ENCODE measurements at regions of chr17 and their contacts with region 1.

Region 1: DNA sequence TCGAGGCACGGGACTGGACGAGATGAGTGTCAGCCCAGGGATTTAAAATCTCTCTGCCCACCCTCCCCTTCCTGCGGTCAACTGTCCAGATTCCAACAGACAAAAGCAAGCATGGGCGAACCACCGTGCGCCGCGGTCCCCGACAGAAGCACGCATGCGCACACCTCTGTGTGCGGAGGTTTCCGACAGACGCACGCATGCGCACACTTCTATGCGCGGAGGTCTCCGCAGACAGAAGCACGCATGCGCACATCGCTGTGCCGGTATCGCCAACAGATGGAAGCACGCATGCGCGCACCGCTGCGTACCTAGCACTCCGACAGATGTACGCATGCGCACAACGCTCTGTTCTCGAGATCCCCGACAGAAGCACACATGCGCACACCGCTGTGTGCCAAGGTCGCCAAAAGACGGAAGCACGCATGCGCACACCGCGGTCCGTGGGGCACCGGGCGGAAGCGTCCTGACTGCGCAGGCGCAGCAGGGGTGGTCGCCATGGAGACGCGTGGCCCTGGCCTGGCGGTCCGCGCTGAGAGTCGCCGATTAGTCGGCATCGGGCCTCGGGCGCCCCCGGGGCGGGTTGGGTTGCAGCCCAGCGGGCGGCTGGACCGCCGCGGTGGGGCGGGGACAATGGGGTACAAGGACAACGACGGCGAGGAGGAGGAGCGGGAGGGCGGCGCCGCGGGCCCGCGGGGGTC is 57.4 kb upstream of the RPH3AL start:
- DNase-seq: peak; percentile 98 to 100 (median 99)
- ATAC-seq: peak; percentile 15
- H3K4me3 ChIP-seq: peak overlapping the region; percentile 86
- H3K4me3 Mint-ChIP-seq: peak overlapping the region; percentile 91
- H3K27ac ChIP-seq: peak overlapping the region; percentile 88 to 95
- H3K27ac Mint-ChIP-seq: peak overlapping the region; percentile 96
- H3K4me1 ChIP-seq: peaks cover 63% of the 10 kb centered on the region
- H3K4me1 Mint-ChIP-seq: peaks cover 58% of the 10 kb centered on the region
- H3K27me3 ChIP-seq: no peaks in the 10 kb centered on the region
- H3K27me3 Mint-ChIP-seq: peaks cover 4% of the 10 kb centered on the region
- CTCF ChIP-seq: no peak

Region 2: GRCh38 chr17:444879-445454 is 35.0 kb after region 1 on chr17:
- CTCF ChIA-PET with region 1: interaction called, 12 read pairs
- POLR2A ChIA-PET with region 1: interaction called, 3 read pairs
- intact Hi-C with region 1: no loop called
- DNase-seq: no peak
- ATAC-seq: no peak
- H3K4me3 ChIP-seq: no peak overlapping the region
- H3K4me3 Mint-ChIP-seq: no peak overlapping the region
- H3K27ac ChIP-seq: no peak overlapping the region
- H3K27ac Mint-ChIP-seq: no peak overlapping the region
- H3K4me1 ChIP-seq: peaks cover 31% of the 10 kb centered on the region
- H3K4me1 Mint-ChIP-seq: peaks cover 14% of the 10 kb centered on the region
- H3K27me3 ChIP-seq: no peaks in the 10 kb centered on the region
- H3K27me3 Mint-ChIP-seq: no peaks in the 10 kb centered on the region
- CTCF ChIP-seq: no peak

Region 3: DNA sequence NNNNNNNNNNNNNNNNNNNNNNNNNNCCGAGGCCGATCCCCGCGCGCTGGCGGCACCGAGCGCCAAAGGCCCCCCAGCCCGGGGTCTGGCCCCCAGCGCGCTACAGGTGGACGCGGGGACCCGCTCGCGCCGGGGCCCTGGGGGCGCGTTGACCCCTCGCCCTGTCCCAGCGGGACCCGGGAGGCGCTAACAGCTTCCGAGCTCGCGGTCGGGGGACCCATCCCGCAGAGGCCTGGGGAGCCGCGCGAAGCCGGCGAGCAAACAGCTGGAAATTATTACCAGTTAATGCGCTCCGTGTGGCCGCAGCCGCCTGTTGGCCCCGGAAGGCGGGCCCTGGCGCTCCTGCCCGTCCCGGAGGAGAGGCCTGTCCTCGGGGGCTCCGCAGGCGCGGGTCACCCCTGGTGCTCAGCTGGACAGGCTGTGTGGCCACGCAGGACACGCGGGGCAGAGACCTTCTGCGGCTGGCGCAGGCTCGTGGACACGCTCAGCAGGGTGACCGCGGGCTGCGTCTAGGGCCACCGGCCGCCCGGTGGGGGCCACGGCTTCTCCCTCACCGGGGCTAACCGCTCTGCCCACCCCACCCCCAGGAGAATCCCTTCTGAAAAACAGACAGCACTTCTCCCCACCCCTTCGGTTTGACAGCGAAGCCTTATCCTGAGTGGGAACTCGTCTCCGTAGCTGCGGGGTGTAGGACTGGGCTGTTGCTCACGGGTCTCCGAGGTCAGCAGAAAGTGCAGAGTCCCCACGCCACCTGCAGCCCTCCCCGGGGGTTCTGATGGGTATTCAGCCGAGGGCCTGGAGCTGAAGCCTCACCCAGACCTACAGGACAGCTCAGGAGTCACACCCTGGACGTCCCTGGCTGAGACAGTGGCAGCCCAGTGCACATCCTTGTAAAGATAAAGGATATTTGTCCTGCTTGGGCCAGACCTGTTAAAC is 81.4 kb after region 1 on chr17:
- CTCF ChIA-PET with region 1: interaction called, 14 read pairs
- POLR2A ChIA-PET with region 1: interaction called, 37 read pairs
- intact Hi-C with region 1: no loop called
- DNase-seq: peak in 10 of 14 experiments; percentile 9 to 66 (median 32)
- ATAC-seq: no peak
- H3K4me3 ChIP-seq: peak overlapping the region; percentile 25
- H3K4me3 Mint-ChIP-seq: peak overlapping the region; percentile 86
- H3K27ac ChIP-seq: no peak overlapping the region
- H3K27ac Mint-ChIP-seq: peak overlapping the region; percentile 88
- H3K4me1 ChIP-seq: peaks cover 25% of the 10 kb centered on the region
- H3K4me1 Mint-ChIP-seq: peaks cover 15% of the 10 kb centered on the region
- H3K27me3 ChIP-seq: no peaks in the 10 kb centered on the region
- H3K27me3 Mint-ChIP-seq: peaks cover 4% of the 10 kb centered on the region
- CTCF ChIP-seq: no peak

Region 4: DNA sequence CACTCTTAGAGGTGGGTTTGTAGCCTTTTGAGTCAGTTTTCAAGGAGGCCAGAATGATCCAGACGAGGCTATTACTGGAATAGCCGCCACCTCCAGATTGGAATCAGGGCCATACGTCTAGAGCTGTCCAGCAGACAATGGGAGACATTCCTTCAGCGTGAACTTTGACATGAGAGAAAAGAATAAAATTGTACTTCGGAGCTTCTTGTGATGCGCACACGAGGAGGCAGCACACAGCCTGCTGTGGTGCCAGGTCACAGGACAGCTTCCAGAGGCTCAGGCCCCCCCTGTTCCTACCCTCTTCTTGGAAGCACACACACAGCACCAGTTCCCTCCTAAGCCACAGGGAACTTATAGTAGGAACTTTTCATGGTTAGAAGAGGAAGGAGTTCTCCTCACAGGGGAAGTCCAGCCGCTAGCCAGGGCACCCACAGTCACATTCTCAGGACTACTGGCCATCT is 223.7 kb after region 1 on chr17:
- CTCF ChIA-PET with region 1: interaction called, 3 read pairs
- POLR2A ChIA-PET with region 1: no interaction called
- intact Hi-C with region 1: loop called in 1 of 2 experiments (anchors 5 kb)
- DNase-seq: no peak
- ATAC-seq: no peak
- H3K4me3 ChIP-seq: no peak overlapping the region
- H3K4me3 Mint-ChIP-seq: no peak overlapping the region
- H3K27ac ChIP-seq: no peak overlapping the region
- H3K27ac Mint-ChIP-seq: no peak overlapping the region
- H3K4me1 ChIP-seq: no peaks in the 10 kb centered on the region
- H3K4me1 Mint-ChIP-seq: no peaks in the 10 kb centered on the region
- H3K27me3 ChIP-seq: no peaks in the 10 kb centered on the region
- H3K27me3 Mint-ChIP-seq: no peaks in the 10 kb centered on the region
- CTCF ChIP-seq: no peak

Region 5: DNA sequence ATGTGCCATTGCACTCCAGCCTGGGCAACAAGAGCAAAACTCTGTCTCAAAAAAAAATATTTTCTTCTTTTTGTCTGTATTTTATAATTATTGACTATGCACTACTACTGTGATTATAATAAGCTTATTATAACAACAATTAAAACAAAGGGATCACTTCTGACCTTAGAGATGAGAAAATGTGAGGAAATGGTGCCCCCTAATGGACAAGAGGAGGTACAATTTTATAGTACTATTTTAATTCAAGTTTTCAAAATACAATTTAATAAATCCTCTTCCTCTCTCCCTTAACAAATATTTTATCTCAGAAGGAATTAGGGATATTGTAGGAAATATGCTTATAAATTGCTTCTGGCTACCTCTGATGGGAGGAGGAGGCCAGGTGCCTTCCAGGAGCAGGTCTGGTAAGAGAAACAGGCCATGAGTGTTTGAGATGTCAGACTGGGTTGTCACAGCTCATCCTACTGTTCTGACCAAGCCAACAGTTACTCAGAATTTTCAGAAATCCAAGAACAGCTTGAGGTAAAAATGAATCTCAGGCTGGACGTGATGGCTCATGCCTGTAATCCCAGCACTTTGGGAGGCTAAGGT is 290.6 kb after region 1 on chr17:
- CTCF ChIA-PET with region 1: interaction called, 47 read pairs
- POLR2A ChIA-PET with region 1: interaction called, 16 read pairs
- intact Hi-C with region 1: loop called (anchors 1 kb)
- DNase-seq: peak in 3 of 14 experiments; percentile 65 to 76 (median 67)
- ATAC-seq: peak; percentile 68
- H3K4me3 ChIP-seq: no peak overlapping the region
- H3K4me3 Mint-ChIP-seq: no peak overlapping the region
- H3K27ac ChIP-seq: no peak overlapping the region
- H3K27ac Mint-ChIP-seq: no peak overlapping the region
- H3K4me1 ChIP-seq: no peaks in the 10 kb centered on the region
- H3K4me1 Mint-ChIP-seq: no peaks in the 10 kb centered on the region
- H3K27me3 ChIP-seq: no peaks in the 10 kb centered on the region
- H3K27me3 Mint-ChIP-seq: no peaks in the 10 kb centered on the region
- CTCF ChIP-seq: peak; percentile 78

Region 6: GRCh38 chr17:752002-752619 is 342.1 kb after region 1 on chr17 and contains the start of gene GEMIN4:
- CTCF ChIA-PET with region 1: no interaction called
- POLR2A ChIA-PET with region 1: interaction called, 4 read pairs
- intact Hi-C with region 1: loop called (anchors 1 kb)
- DNase-seq: peak; percentile 91 to 99 (median 98)
- ATAC-seq: peak; percentile 82
- H3K4me3 ChIP-seq: peak within 1 kb of the TSS; percentile 59
- H3K4me3 Mint-ChIP-seq: peak within 1 kb of the TSS; percentile 98
- H3K27ac ChIP-seq: peak within 1 kb of the TSS in 1 of 2 donors; percentile 65
- H3K27ac Mint-ChIP-seq: peak within 1 kb of the TSS; percentile 83
- H3K4me1 ChIP-seq: peaks cover 29% of the 10 kb centered on the region
- H3K4me1 Mint-ChIP-seq: peaks cover 44% of the 10 kb centered on the region
- H3K27me3 ChIP-seq: no peaks in the 10 kb centered on the region
- H3K27me3 Mint-ChIP-seq: no peaks in the 10 kb centered on the region
- CTCF ChIP-seq: peak; percentile 99
- total RNA-seq, gene GEMIN4: 16.0 to 18.0 TPM